GM10248 (cell line): ENCODE measurements at regions of chr1 and their contacts with region 1.

Region 1: GRCh38 chr1:67760030-67760821 is 73.0 kb downstream of the GNG12 start:
- DNase-seq: peak; percentile 78
- CTCF ChIP-seq: peak; percentile 77

Region 2: DNA sequence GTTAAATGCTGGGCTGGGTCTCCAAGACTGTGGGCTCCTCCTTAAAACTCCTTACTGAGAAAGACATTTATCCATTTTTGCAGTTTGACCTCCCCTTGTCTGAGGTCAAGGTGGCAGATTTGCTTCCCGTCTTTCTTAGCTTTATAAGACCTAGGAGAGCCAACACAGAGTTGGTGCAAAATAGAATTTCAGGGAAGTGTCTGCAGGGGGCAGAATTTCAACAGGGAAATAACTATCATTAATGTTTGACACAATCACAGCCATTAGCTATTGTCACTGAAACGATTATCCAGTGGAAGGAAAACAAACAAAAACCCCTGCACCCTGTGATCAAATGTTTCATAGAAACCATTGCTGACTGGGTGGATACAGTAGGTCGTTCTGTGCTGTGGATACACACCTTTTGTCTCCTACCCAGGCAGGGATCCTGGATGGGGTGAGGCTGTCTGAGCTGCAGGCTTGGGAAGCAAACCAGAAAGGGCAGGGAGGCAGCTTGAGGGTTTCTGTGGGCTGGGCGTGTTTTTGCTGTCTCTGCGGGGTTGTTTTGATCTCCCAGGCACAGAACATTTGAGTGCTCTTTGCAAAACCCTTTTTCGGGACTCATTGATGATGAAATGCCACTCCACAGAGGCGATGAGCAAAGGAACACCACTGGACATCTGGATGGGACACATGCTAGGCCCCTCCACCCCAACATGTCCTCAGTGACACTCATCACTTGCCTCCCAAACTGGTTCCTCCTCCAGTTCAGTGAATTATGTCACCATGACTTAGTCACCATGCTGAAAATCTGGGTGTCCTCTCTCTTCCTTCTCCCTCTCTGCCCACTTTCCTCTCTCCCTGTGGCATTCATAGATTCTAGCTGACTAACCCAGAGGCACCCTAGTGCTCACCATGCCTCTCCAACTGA is 235.8 kb before region 1 on chr1:
- CTCF ChIA-PET with region 1: interaction called, 11 read pairs
- POLR2A ChIA-PET with region 1: no interaction called
- DNase-seq: no peak
- CTCF ChIP-seq: no peak

Region 3: DNA sequence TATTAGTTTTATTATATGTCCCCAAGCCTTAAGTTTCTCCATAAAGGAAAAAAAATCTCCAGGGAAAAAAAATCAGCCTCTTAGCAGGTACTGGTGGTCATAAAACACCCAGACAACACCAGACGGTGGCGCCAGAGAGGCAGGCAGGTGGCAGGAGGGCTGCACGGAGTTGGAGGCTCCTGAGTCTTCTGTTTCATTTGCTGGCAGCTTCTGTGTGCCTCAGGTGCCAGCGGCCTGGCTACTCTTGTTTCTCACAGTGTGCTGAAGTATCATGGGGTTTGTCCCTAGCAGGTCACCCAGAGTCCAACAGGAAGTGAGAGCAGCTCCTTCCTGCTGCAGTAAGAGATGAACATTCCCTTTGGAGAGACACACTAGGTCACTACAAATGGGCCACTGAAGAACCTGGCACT is 198.5 kb before region 1 on chr1:
- CTCF ChIA-PET with region 1: interaction called, 99 read pairs
- POLR2A ChIA-PET with region 1: no interaction called
- DNase-seq: peak; percentile 78
- CTCF ChIP-seq: peak; percentile 80

Region 4: GRCh38 chr1:67700692-67701410 is 59.4 kb before region 1 on chr1:
- CTCF ChIA-PET with region 1: interaction called, 10 read pairs
- POLR2A ChIA-PET with region 1: no interaction called
- DNase-seq: peak; percentile 43
- CTCF ChIP-seq: no peak

Region 5: DNA sequence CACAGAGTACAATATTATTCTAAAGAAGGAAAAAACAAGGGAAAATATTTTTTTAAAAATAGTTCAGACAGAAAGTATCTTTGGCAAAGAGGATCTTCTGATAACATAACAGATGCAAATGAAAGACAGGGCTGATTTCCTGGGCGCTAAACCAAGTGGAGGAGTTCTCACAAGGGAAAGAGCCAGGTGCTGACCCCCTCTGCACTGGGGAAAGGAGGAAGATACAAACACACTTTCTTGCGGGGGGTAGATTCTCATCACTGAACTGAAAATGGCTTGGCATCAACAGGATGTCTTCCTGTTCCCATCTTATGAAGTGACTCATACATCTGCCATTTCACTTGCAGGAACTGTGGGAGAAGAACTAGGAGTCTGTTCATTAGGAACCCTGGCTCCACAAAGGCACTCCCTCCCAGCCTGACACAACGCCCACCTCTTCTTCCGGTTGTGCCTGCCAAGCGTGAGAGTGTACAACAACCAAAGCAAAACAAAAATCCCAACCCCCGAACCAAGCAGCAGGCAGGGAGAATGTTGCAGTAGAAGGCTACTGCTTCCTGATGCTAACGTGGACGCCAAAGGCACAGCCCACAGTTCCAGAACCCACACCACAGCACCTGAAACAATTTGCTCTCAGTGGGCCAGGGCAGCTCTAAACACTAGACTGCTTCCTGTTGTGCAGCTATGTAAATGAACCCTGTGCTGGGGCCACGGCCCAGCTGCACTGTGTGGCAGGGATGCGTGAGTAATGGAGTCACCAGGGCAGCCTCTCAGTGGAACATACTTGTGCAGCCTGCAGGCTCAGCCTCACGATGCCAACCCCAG is 24.2 kb before region 1 on chr1:
- CTCF ChIA-PET with region 1: interaction called, 62 read pairs
- POLR2A ChIA-PET with region 1: no interaction called
- DNase-seq: peak; percentile 68
- CTCF ChIP-seq: no peak

Region 6: DNA sequence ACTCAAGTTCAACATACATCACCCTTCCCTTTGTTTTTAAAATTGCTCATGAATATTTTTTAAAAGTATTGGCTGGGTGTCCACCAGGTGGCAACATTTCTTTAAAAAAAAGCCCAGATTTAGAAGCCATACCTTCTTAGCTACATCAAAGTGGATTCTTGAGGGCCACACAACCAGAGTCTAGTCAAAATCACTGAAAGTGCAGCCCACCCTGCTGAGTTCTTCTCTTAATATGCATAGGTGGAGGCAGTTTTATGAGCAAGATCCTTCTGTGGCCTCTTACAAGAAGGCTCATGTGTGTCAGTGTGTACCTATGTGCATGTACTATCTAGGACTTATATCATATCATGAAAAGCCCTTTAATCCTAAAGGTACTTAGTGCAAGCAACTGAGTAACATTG is 89.9 kb after region 1 on chr1:
- CTCF ChIA-PET with region 1: interaction called, 52 read pairs
- POLR2A ChIA-PET with region 1: no interaction called
- DNase-seq: peak; percentile 18
- CTCF ChIP-seq: peak; percentile 57